ENCODE measurements at regions of chr17 and their contacts with region 1.

Region 1: DNA sequence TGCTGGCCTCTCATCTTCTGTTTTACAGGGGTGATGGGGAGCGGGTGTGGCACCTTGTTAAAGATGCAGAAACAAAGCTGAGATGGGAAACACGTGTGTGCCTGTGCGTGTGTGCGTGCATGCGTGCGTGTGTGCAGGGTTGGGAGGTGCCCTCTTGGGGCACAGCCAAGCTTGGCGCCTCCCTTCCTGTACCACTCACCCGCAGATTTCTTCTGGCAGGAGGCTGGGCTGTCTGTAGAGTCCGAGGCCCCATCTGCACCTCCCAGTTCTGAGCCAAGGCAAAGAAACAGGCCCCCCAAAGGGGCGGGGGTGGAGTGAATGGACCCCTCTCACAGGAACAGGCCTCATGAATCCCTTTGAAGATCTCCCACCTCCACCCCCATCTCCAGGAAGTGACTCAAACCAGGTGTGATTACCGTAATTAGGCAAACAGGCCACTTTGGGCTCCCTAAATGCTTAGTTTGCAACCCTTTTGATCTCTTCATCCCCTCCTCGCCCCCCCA is 20.9 kb downstream of the TNS4 start:
- DNase-seq: peak; percentile 95
- H3K4me3 Mint-ChIP-seq: peak overlapping the region; percentile 76
- H3K27ac Mint-ChIP-seq: peak overlapping the region; percentile 98
- H3K4me1 Mint-ChIP-seq: peaks cover 70% of the 10 kb centered on the region
- H3K27me3 Mint-ChIP-seq: no peaks in the 10 kb centered on the region

Region 2: GRCh38 chr17:40443583-40444327 is 36.8 kb before region 1 on chr17:
- CTCF ChIA-PET with region 1: interaction called, 13 read pairs
- POLR2A ChIA-PET with region 1: no interaction called
- intact Hi-C with region 1: loop called (anchors 2 kb)
- DNase-seq: peak; percentile 76
- H3K4me3 Mint-ChIP-seq: peak overlapping the region; percentile 65
- H3K27ac Mint-ChIP-seq: peak overlapping the region; percentile 82
- H3K4me1 Mint-ChIP-seq: peaks cover 41% of the 10 kb centered on the region
- H3K27me3 Mint-ChIP-seq: peaks cover 1% of the 10 kb centered on the region

Region 3: GRCh38 chr17:40516581-40517285 is 36.2 kb after region 1 on chr17:
- CTCF ChIA-PET with region 1: interaction called, 11 read pairs
- POLR2A ChIA-PET with region 1: interaction called, 5 read pairs
- intact Hi-C with region 1: loop called (anchors 1 kb)
- DNase-seq: peak; percentile 83
- H3K4me3 Mint-ChIP-seq: peak overlapping the region; percentile 82
- H3K27ac Mint-ChIP-seq: peak overlapping the region; percentile 85
- H3K4me1 Mint-ChIP-seq: peaks cover 60% of the 10 kb centered on the region
- H3K27me3 Mint-ChIP-seq: no peaks in the 10 kb centered on the region

Measured in activated CD4-positive, alpha-beta memory T cell treated with anti-CD3 and anti-CD28 coated beads for 36 hours (primary cell).